Mammary epithelial cell (primary cell): ENCODE measurements at regions of chr18 and their contacts with region 1.

Region 1: DNA sequence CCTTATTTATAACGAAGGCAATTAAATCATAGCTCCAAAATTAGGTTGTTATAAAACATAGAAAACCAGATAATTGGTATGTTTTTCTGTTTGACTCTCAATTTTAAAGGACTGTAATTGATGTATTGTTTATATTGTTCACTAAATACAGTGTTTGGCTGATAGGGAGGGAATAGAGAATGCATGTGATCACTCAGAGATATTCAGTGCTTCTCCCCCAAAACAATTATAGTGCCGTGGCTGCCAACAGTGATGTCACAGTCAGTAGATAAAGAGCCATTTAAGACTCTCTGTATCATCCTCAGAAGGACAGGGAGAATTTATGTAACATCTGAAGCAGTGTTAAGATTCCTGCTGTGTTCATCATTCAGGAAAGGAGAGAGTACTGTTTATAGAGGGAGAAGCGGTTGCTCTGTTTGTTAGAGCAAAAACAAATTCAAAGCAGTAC is 69.6 kb downstream of the PHLPP1 start:
- DNase-seq: no peak
- H3K4me3 ChIP-seq: no peak overlapping the region
- H3K27ac ChIP-seq: peak overlapping the region; percentile 11
- H3K4me1 ChIP-seq: peaks cover 41% of the 10 kb centered on the region
- H3K27me3 ChIP-seq: no peaks in the 10 kb centered on the region
- CTCF ChIP-seq: no peak

Region 2: GRCh38 chr18:62767321-62767720 is 17.7 kb before region 1 on chr18:
- CTCF ChIA-PET with region 1: no interaction called
- dilution Hi-C with region 1: no loop called
- in situ Hi-C with region 1: no loop called
- intact Hi-C with region 1: loop called (anchors 1 kb)
- DNase-seq: peak; percentile 62
- H3K4me3 ChIP-seq: peak overlapping the region; percentile 21 to 48 (median 28)
- H3K27ac ChIP-seq: peak overlapping the region; percentile 89
- H3K4me1 ChIP-seq: peaks cover 48% of the 10 kb centered on the region
- H3K27me3 ChIP-seq: no peaks in the 10 kb centered on the region
- CTCF ChIP-seq: no peak

Region 3: GRCh38 chr18:62957885-62958472 is 173.0 kb after region 1 on chr18:
- CTCF ChIA-PET with region 1: no interaction called
- dilution Hi-C with region 1: no loop called
- in situ Hi-C with region 1: no loop called
- intact Hi-C with region 1: loop called (anchors 10 kb)
- DNase-seq: peak; percentile 19
- H3K4me3 ChIP-seq: no peak overlapping the region
- H3K27ac ChIP-seq: no peak overlapping the region
- H3K4me1 ChIP-seq: no peaks in the 10 kb centered on the region
- H3K27me3 ChIP-seq: no peaks in the 10 kb centered on the region
- CTCF ChIP-seq: peak; percentile 14 to 50